Esophagus muscularis mucosa (tissue), 4 donors: ENCODE measurements at regions of chr13 and their contacts with region 1.

Region 1: DNA sequence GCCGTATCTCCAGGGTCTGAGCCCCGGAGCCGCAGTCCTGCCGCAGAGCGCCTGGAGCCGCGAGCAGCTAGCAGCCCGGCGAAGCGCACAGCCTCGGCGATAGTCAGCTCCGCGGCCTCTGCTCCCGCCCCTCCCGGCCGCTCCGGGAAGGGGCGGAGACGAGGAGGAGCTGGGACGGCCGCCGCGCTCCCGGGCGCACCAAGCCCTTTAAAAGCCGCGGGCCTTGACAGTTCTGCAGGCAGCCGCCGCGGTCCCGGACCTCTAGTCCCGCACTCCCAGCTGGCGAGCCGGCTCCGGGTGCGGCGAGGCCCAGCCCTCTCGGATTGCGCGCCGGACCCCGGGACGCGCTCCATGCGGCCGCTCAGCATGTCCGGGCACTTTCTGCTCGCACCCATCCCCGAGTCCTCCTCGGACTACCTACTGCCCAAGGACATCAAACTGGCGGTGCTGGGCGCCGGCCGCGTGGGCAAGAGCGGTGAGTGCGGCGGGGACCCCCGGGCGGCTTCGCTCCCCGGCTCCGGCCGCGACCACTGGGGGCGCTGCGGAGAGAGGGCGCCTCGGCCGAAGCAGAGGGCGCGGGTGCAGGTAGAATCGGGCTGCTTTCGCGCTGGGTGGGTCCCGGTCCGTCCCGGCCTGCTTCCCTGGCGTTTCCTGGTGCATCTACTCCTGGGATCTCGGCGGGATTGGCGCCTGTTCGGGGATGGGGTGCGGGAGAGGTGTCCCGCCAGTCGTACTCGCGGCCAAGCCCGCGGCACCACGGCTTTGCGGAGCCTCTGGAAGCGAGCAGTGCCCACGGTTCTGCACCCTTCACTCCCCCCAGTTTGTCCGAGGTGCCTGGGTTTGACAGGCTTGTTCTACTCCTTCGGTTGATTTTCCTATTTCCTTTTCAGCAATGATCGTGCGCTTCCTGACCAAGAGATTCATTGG is at the start of gene RASL11A:
- DNase-seq: peak; percentile 93
- H3K4me3 ChIP-seq: peak within 1 kb of the TSS; percentile 69 to 86 (median 79)
- H3K27ac ChIP-seq: peak within 1 kb of the TSS; percentile 91 to 98 (median 94)
- H3K4me1 ChIP-seq: peaks cover 37 to 70% (median 63%) of the 10 kb centered on the region in 4 donors
- H3K27me3 ChIP-seq: peaks cover 0 to 6% (median 0%) of the 10 kb centered on the region in 4 donors
- CTCF ChIP-seq: peak; percentile 78 to 96 (median 93)
- EP300 ChIP-seq: no peak
- POLR2A ChIP-seq: peak; percentile 74
- total RNA-seq, gene RASL11A: 11.2 to 98.9 (median 41.1) TPM

Region 2: GRCh38 chr13:26557393-26558023 is 713.3 kb before region 1 on chr13 and contains the start of gene WASF3:
- intact Hi-C with region 1: loop called (anchors 5 kb)
- DNase-seq: peak; percentile 97
- H3K4me3 ChIP-seq: peak within 1 kb of the TSS; percentile 78 to 88 (median 84)
- H3K27ac ChIP-seq: peak within 1 kb of the TSS; percentile 71 to 85 (median 80)
- H3K4me1 ChIP-seq: peaks cover 0 to 27% (median 19%) of the 10 kb centered on the region in 4 donors
- H3K27me3 ChIP-seq: no peaks in the 10 kb centered on the region
- CTCF ChIP-seq: no peak
- EP300 ChIP-seq: no peak
- POLR2A ChIP-seq: no peak
- total RNA-seq, gene WASF3: 16.6 to 19.9 (median 18.4) TPM

Region 3: GRCh38 chr13:26946684-26947343 is 324.0 kb before region 1 on chr13:
- intact Hi-C with region 1: loop called (anchors 10 kb)
- DNase-seq: no peak
- H3K4me3 ChIP-seq: no peak overlapping the region
- H3K27ac ChIP-seq: no peak overlapping the region
- H3K4me1 ChIP-seq: peaks cover 0 to 5% (median 3%) of the 10 kb centered on the region in 4 donors
- H3K27me3 ChIP-seq: no peaks in the 10 kb centered on the region
- CTCF ChIP-seq: peak; percentile 81 to 88 (median 84)
- EP300 ChIP-seq: no peak
- POLR2A ChIP-seq: no peak

Region 4: DNA sequence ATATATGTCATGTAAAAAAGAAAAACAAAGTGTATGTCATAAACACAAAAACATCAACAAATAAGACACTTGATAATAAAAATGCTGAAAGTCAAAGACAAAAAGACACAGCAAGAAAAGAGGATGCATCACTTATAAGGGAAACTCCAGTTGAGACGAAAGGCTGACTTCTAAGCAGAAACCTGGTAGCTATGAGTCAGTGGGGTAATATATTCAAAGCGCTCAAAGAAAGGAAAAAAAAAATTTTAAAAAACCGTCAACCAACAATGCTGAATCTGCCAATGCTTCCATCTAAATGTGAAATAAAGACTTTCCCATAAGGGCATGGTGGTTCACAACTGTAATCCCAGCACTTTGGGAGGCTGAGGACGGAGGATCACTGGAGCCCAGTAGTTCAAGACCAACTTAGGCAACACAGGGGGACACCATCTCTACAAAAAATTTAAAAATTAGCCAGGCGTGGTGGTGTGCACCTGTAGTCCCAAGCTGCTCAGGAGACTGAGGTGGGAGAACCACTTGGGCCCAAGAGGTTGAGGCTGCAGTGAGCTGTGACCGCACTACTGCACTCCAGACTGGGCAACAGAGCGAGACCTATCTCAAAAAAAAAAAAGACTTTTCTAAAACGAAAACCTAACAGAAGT is 123.2 kb before region 1 on chr13:
- intact Hi-C with region 1: no loop called
- DNase-seq: no peak
- H3K4me3 ChIP-seq: no peak overlapping the region
- H3K27ac ChIP-seq: no peak overlapping the region
- H3K4me1 ChIP-seq: peaks cover 7 to 76% (median 62%) of the 10 kb centered on the region in 4 donors
- H3K27me3 ChIP-seq: no peaks in the 10 kb centered on the region
- CTCF ChIP-seq: no peak
- EP300 ChIP-seq: no peak
- POLR2A ChIP-seq: no peak

Region 5: GRCh38 chr13:27171827-27172494 is 98.9 kb before region 1 on chr13:
- intact Hi-C with region 1: loop called (anchors 5 kb)
- DNase-seq: no peak
- H3K4me3 ChIP-seq: peak overlapping the region; percentile 76 to 94 (median 82)
- H3K27ac ChIP-seq: peak overlapping the region; percentile 92 to 98 (median 97)
- H3K4me1 ChIP-seq: peaks cover 32 to 45% (median 41%) of the 10 kb centered on the region in 4 donors
- H3K27me3 ChIP-seq: no peaks in the 10 kb centered on the region
- CTCF ChIP-seq: peak in 2 of 3 experiments; percentile 46 to 51
- EP300 ChIP-seq: no peak
- POLR2A ChIP-seq: no peak

Region 6: GRCh38 chr13:27353166-27353583 is 82.3 kb after region 1 on chr13:
- intact Hi-C with region 1: loop called (anchors 5 kb)
- DNase-seq: no peak
- H3K4me3 ChIP-seq: peak overlapping the region in 3 of 4 donors; percentile 5 to 37 (median 12)
- H3K27ac ChIP-seq: peak overlapping the region; percentile 65 to 75 (median 72)
- H3K4me1 ChIP-seq: peaks cover 8 to 36% (median 30%) of the 10 kb centered on the region in 4 donors
- H3K27me3 ChIP-seq: no peaks in the 10 kb centered on the region
- CTCF ChIP-seq: no peak
- EP300 ChIP-seq: no peak
- POLR2A ChIP-seq: no peak

Region 7: GRCh38 chr13:27449936-27450828 is 179.3 kb after region 1 on chr13 and contains the start of gene MTIF3:
- intact Hi-C with region 1: loop called (anchors 10 kb)
- DNase-seq: peak; percentile 98
- H3K4me3 ChIP-seq: peak within 1 kb of the TSS; percentile 84 to 93 (median 92)
- H3K27ac ChIP-seq: peak within 1 kb of the TSS; percentile 95 to 99 (median 98)
- H3K4me1 ChIP-seq: peaks cover 31 to 47% (median 38%) of the 10 kb centered on the region in 4 donors
- H3K27me3 ChIP-seq: no peaks in the 10 kb centered on the region
- CTCF ChIP-seq: peak in 1 of 3 experiments; percentile 23
- EP300 ChIP-seq: no peak
- POLR2A ChIP-seq: peak; percentile 33
- total RNA-seq, gene MTIF3: 45.1 to 86.6 (median 67.5) TPM

Region 8: GRCh38 chr13:27728271-27728670 is 457.4 kb after region 1 on chr13:
- intact Hi-C with region 1: no loop called
- DNase-seq: peak; percentile 78
- H3K4me3 ChIP-seq: no peak overlapping the region
- H3K27ac ChIP-seq: no peak overlapping the region
- H3K4me1 ChIP-seq: no peaks in the 10 kb centered on the region
- H3K27me3 ChIP-seq: no peaks in the 10 kb centered on the region
- CTCF ChIP-seq: no peak
- EP300 ChIP-seq: no peak
- POLR2A ChIP-seq: no peak